ENCODE measurements at regions of chr3 and their contacts with region 1.

Region 1: DNA sequence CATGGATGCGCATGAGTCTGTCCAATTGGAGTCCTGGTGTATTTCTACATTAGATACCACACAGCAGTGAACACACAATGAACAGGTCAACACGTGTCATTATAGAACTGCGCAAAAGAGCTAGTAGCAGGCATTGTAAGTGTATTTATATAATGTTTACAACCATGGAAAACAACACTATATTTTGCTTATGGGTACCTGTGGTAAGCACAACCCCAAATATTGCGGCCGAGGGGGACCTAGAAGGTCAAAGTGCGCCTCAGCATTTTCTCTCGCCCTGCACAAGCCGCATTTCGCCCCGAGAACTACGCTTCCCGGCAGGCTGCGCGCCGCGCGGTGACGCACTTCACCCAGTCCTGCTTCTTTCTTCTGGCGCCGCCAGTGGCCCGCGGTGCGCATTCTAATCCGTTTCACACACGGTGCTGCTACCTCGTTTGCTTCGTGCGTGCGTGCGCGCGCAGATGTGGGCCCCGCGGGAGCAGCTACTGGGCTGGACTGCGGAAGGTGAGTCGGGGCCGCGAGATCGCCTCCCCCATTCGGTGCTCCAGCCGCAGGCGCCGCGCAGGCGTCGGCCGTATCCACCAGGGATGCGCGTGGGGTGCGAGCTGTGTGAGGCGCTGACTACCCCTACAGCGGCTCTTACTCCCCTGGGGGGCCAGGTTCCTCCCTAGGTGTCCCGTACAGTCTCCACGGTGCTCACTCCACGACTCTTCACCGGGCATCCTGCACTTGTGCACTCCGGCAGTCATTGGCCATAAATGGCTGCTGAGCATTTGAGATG is at the start of gene ZNF589:
- DNase-seq: peak; percentile 50
- ATAC-seq: peak; percentile 100
- H3K4me3 ChIP-seq: peak within 1 kb of the TSS; percentile 79 to 82
- H3K27ac ChIP-seq: peak within 1 kb of the TSS; percentile 67
- H3K4me1 ChIP-seq: no peaks in the 10 kb centered on the region
- H3K27me3 ChIP-seq: no peaks in the 10 kb centered on the region
- CTCF ChIP-seq: no peak; the same call in 1 of the 2 replicates
- total RNA-seq, gene ZNF589: 4.9 TPM

Region 2: GRCh38 chr3:47089630-47090029 is 1151.3 kb before region 1 on chr3:
- CTCF ChIA-PET with region 1: no interaction called
- POLR2A ChIA-PET with region 1: no interaction called
- in situ Hi-C with region 1: no loop called
- intact Hi-C with region 1: no loop called
- DNase-seq: no peak
- ATAC-seq: no peak
- H3K4me3 ChIP-seq: no peak overlapping the region
- H3K27ac ChIP-seq: no peak overlapping the region
- H3K4me1 ChIP-seq: no peaks in the 10 kb centered on the region
- H3K27me3 ChIP-seq: no peaks in the 10 kb centered on the region
- CTCF ChIP-seq: no peak

Region 3: DNA sequence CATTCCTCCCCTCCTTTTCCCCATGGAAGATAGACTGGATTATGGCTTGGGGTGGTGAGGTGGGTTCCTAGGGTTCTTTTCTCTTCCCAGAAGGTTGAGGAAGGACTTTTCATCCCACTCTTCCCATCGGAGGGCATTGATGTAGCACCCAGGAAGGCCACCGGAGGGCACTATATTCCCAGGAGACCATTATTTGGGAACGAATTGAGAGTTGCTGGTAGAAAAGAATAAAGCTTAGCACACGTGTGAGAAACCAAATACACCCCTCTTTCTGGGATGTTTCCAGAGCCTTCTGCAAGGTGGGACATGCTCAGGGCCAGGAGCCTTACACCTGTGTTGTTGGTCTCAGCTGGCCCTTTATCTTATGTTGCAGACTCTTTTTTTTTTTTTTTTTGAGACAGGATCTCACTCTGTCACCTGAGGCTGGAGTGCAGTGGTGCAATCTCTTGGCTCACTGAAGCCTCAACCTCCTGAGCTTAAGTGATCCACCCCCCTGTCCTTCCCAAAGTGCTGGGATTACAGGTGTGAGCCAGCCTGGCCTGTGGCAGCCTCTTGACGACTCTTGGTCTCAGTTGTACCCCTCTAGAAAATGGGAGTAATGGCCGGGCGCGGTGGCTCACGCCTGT is 46.3 kb before region 1 on chr3:
- CTCF ChIA-PET with region 1: interaction called, 3 read pairs
- POLR2A ChIA-PET with region 1: no interaction called
- in situ Hi-C with region 1: no loop called
- intact Hi-C with region 1: loop called (anchors 10 kb)
- DNase-seq: peak; percentile 46
- ATAC-seq: peak; percentile 89
- H3K4me3 ChIP-seq: no peak overlapping the region
- H3K27ac ChIP-seq: no peak overlapping the region
- H3K4me1 ChIP-seq: no peaks in the 10 kb centered on the region
- H3K27me3 ChIP-seq: no peaks in the 10 kb centered on the region
- CTCF ChIP-seq: peak; percentile 87

Region 4: DNA sequence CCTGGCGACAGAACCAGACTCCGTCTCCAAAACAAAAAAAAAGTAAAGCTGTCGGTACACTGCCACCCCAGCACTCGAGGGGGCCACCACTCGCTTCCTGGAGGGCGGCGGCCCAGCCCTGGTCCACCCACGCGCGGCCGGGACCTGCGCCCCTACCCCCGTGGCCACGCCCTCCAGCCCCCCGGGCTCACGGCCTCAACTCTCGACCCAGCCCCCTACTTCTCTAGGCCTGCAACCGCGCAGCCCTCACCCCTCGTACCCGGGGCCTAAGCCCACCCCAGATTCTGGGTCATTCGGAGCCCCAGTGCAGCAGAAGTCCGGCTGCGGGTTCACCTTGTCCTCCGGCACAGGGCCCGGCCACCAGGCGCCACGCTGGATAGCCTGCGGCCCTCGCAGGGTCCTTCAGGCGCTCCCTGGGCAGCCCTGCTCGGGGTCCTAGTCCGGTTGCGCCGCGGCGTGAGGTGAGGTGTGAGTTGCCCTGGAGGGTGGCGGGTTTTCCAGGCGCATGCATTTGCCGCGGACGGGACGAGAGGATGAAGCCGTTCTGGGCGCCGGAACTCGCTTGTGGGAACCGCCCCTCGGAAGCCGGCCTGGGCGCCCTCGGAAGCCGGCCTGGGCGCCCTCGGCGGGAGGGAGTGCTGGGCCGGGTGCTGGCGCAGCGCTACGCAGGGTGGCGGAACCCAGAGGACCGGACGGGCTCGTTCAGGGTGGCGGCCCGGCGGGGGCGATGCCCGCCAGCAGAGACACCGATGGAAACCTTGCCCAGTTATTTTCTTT is 60.3 kb after region 1 on chr3:
- CTCF ChIA-PET with region 1: no interaction called
- POLR2A ChIA-PET with region 1: no interaction called
- in situ Hi-C with region 1: no loop called
- intact Hi-C with region 1: no loop called
- DNase-seq: peak; percentile 42
- ATAC-seq: peak; percentile 98
- H3K4me3 ChIP-seq: peak within 1 kb of the TSS; percentile 69 to 82
- H3K27ac ChIP-seq: peak within 1 kb of the TSS; percentile 90
- H3K4me1 ChIP-seq: peaks cover 2% of the 10 kb centered on the region; the same call in 1 of the 2 replicates
- H3K27me3 ChIP-seq: no peaks in the 10 kb centered on the region
- CTCF ChIP-seq: no peak

Measured in Panc1 (cell line).